ENCODE measurements at regions of chr4 and their contacts with region 1.

Region 1: DNA sequence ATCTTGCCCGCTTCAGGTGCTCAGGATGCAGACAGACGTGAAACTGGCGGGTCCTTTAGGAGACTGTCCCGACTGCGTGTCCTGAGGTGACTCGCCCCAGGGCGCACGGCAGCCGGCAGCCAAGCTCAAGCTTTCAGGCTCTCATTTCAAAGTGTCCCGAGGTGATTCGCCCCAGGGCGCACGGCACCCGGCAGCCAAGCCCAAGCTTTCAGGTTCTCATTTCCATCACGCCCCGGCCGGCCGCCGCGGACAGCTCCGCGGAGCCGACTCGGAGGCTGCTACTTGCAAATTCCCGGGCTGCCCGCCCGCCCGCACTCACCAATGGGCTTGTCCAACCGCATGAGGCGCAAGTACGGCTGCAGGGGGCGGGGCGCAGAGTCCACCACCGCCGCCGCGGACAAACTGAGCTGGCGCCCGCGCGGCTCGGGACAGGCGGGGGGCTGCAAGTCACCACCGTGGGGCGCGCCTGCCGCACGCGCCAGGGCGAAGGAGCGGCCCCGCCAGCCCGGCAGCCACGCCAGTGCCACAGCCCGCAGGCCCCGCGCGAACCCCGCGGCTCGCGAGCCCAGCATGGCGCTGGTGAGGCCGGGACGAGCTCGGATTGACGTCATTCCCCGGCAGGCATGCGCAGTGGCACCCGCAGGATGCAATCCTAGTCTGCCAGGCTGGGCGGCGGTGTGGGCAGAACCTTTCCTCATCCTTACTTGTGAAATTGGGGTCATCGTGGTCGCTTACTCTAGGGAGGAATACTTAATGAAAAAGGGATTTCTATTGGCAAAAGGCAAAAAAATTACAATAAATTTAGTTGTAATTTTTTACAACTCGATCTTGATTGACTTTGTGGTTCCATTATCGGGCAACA is at the start of gene COQ2:
- DNase-seq: peak; percentile 97
- H3K4me3 Mint-ChIP-seq: peak within 1 kb of the TSS; percentile 93
- H3K27ac Mint-ChIP-seq: peak within 1 kb of the TSS; percentile 91
- H3K4me1 Mint-ChIP-seq: peaks cover 34% of the 10 kb centered on the region
- H3K27me3 Mint-ChIP-seq: no peaks in the 10 kb centered on the region
- total RNA-seq, gene COQ2: 18.7 to 19.5 TPM

Region 2: GRCh38 chr4:82462415-82462831 is 822.0 kb before region 1 on chr4:
- CTCF ChIA-PET with region 1: no interaction called
- intact Hi-C with region 1: loop called (anchors 2 kb)
- DNase-seq: peak; percentile 93
- H3K4me3 Mint-ChIP-seq: no peak overlapping the region
- H3K27ac Mint-ChIP-seq: no peak overlapping the region
- H3K4me1 Mint-ChIP-seq: peaks cover 2% of the 10 kb centered on the region
- H3K27me3 Mint-ChIP-seq: no peaks in the 10 kb centered on the region

Region 3: GRCh38 chr4:83012687-83013419 is 271.6 kb before region 1 on chr4:
- CTCF ChIA-PET with region 1: no interaction called
- intact Hi-C with region 1: loop called (anchors 1 kb)
- DNase-seq: peak; percentile 98
- H3K4me3 Mint-ChIP-seq: peak overlapping the region; percentile 95
- H3K27ac Mint-ChIP-seq: peak overlapping the region; percentile 87
- H3K4me1 Mint-ChIP-seq: peaks cover 29% of the 10 kb centered on the region
- H3K27me3 Mint-ChIP-seq: no peaks in the 10 kb centered on the region

Region 4: DNA sequence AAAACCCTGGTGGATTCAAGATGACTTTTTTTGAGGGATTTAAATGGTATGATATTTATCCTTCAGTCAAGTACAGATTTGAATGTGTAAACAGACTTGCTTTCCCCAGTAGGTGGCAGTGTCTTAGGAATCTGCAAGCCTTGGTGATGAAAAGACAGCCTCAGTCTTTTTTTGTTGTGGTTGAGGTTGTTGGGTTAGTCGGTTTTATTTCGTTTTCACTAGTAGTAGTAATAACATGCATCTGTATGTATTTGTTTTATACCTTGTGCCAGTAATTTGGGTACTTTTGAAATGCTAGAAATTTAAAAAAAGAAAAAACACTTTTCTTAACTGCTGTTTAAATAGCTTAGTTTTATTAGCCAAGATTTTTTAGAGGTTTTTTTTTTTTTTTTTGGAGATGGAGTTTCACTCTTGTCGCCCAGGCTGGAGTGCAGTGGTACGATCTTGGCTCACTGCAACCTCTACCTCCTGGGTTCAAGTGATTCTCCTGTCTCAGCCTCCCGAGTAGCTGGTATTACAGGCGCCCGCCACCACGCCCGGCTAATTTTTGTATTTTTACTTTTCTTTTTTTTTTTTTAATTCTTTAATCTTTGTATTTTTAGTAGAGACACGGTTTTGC is 210.2 kb before region 1 on chr4:
- CTCF ChIA-PET with region 1: interaction called, 15 read pairs
- intact Hi-C with region 1: loop called (anchors 1 kb)
- DNase-seq: peak; percentile 76
- H3K4me3 Mint-ChIP-seq: no peak overlapping the region
- H3K27ac Mint-ChIP-seq: no peak overlapping the region
- H3K4me1 Mint-ChIP-seq: peaks cover 13% of the 10 kb centered on the region
- H3K27me3 Mint-ChIP-seq: no peaks in the 10 kb centered on the region

Region 5: DNA sequence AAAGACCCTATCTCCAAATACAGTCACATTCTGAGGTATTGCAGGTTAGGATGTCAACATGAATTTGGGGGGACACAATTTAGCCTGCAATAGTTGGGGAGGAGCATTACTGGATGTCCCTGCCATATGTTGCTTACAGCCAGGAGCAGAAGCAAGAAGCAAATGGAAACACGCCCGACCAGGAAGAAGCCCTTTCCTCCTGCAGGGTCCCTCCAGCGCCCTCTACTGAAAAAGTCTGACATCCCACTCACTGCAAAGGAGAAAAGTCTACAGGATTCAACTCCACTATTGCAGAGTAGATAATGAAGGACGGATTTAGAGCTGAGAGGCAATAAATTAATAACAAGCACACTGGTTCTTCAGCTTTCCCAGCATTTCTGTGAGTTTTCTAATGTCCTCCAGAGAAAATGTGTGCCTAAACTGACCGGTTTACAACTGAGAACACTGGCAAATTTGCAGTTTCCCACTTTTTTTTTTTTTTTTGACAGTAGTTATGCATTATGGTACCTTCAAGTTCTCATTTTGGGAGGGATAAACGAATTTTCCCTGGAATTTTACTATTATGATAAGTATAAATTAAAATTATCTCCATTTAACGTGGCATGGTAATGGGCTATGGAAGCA is 31.5 kb before region 1 on chr4:
- CTCF ChIA-PET with region 1: interaction called, 11 read pairs
- intact Hi-C with region 1: loop called (anchors 1 kb)
- DNase-seq: peak; percentile 90
- H3K4me3 Mint-ChIP-seq: no peak overlapping the region
- H3K27ac Mint-ChIP-seq: no peak overlapping the region
- H3K4me1 Mint-ChIP-seq: peaks cover 6% of the 10 kb centered on the region
- H3K27me3 Mint-ChIP-seq: no peaks in the 10 kb centered on the region

Region 6: GRCh38 chr4:83387753-83388676 is 103.6 kb after region 1 on chr4:
- CTCF ChIA-PET with region 1: interaction called, 8 read pairs
- intact Hi-C with region 1: loop called (anchors 1 kb)
- DNase-seq: peak; percentile 52
- H3K4me3 Mint-ChIP-seq: no peak overlapping the region
- H3K27ac Mint-ChIP-seq: no peak overlapping the region
- H3K4me1 Mint-ChIP-seq: peaks cover 8% of the 10 kb centered on the region
- H3K27me3 Mint-ChIP-seq: no peaks in the 10 kb centered on the region

Region 7: DNA sequence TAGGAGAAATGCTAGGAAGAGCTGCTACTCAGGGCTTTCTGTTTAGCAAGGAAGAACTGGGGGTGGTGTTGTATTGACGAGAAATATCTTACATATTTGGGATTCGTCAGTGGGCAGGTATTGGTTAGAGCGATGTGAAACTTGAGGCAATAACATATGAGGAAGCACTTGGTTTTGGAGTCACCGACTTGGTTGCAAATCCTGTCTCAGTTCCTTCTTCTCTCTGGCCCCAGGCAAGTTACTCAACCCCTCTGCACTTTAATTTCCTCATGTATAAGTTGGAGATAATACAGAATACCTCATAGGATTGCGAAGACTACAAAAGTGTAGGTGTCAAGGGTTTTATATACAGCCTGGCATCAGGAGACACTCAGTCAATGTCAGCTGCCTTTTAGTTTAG is 285.6 kb after region 1 on chr4:
- CTCF ChIA-PET with region 1: no interaction called
- intact Hi-C with region 1: no loop called
- DNase-seq: no peak
- H3K4me3 Mint-ChIP-seq: no peak overlapping the region
- H3K27ac Mint-ChIP-seq: no peak overlapping the region
- H3K4me1 Mint-ChIP-seq: peaks cover 7% of the 10 kb centered on the region
- H3K27me3 Mint-ChIP-seq: no peaks in the 10 kb centered on the region

Region 8: GRCh38 chr4:83639849-83640493 is 355.5 kb after region 1 on chr4:
- CTCF ChIA-PET with region 1: no interaction called
- intact Hi-C with region 1: loop called (anchors 1 kb)
- DNase-seq: peak; percentile 74
- H3K4me3 Mint-ChIP-seq: no peak overlapping the region
- H3K27ac Mint-ChIP-seq: no peak overlapping the region
- H3K4me1 Mint-ChIP-seq: peaks cover 3% of the 10 kb centered on the region
- H3K27me3 Mint-ChIP-seq: no peaks in the 10 kb centered on the region

Measured in activated naive CD4-positive, alpha-beta T cell treated with anti-CD3 and anti-CD28 coated beads for 36 hours (primary cell).